ENCODE measurements at regions of chr12 and their contacts with region 1.

Region 1: GRCh38 chr12:8026291-8026900 is 6.1 kb upstream of the FOXJ2 start:
- DNase-seq: peak; percentile 99
- H3K4me3 ChIP-seq: peak overlapping the region; percentile 57 to 97 (median 77)
- H3K27ac ChIP-seq: peak overlapping the region; percentile 100
- H3K4me1 ChIP-seq: peaks cover 3% of the 10 kb centered on the region
- H3K27me3 ChIP-seq: no peaks in the 10 kb centered on the region
- CTCF ChIP-seq: no peak
- POLR2A ChIP-seq: peak; percentile 41

Region 2: DNA sequence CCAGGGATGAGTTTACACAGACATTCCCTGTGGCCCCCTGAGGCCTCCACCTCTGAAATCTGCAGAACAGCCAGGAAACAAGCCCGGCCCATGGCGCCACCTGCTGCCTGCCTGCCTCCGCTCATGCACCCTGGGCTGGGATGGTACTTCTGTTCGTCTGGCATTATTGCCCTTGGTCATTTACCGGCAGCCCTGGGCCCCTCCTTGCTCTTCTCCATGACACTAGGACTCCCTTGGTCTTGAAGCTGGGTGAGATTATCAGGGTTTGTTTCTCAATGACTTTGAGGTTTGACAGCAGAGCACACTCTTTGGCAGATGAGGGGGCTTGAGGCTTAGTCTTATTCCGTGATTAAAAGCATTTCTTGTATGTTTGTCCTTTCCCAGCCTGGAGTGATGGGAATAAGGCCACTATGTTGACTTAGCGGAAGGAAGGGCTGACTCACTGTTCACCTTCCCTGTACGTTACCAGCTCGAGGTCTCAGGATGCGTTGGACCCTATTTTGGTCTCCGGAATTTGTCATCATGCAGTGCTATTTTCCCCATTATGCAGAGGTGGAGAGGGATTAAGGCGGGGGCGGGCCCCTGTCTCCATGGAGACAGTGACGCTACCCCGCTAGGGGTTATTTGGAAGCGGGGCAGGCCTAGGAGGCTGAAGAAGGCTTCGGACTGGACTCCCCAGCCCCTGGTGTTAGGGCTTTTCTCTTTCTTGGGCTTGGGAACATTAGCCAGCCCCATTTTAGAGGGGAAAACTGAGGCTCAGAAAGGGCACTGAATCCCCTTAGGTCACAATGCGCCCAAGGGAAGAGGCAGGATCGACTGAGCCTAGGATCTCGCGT is 837.6 kb before region 1 on chr12:
- CTCF ChIA-PET with region 1: no interaction called
- POLR2A ChIA-PET with region 1: no interaction called
- dilution Hi-C with region 1: no loop called
- intact Hi-C with region 1: loop called (anchors 2 kb)
- DNase-seq: peak; percentile 95
- H3K4me3 ChIP-seq: peak overlapping the region in 2 of 3 experiments; percentile 64 to 69
- H3K27ac ChIP-seq: peak overlapping the region; percentile 98
- H3K4me1 ChIP-seq: peaks cover 22% of the 10 kb centered on the region
- H3K27me3 ChIP-seq: no peaks in the 10 kb centered on the region
- CTCF ChIP-seq: peak; percentile 87 to 88
- POLR2A ChIP-seq: no peak

Region 3: DNA sequence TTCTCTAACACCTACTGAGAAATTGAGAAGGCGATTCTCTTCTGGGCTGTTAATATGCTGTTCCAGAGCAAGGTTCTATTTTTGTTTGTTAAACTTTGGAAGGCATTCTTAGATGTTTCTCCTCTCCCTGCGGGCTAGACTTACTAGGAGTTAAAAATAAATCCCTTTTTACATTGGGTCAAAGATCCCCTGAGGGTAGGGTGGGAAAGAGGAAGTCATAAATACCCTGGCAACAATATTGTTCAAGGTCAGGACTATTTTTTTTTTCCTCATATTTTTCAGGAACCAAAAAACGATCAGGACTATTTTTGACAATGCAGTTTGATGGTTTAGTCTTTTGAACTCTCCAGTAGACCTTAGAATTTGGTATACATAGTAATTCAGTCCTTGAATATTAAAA is 141.7 kb before region 1 on chr12:
- CTCF ChIA-PET with region 1: no interaction called
- POLR2A ChIA-PET with region 1: no interaction called
- dilution Hi-C with region 1: no loop called
- intact Hi-C with region 1: no loop called
- DNase-seq: no peak
- H3K4me3 ChIP-seq: no peak overlapping the region
- H3K27ac ChIP-seq: no peak overlapping the region
- H3K4me1 ChIP-seq: no peaks in the 10 kb centered on the region
- H3K27me3 ChIP-seq: peaks cover 0 to 8% of the 10 kb centered on the region in 2 experiments
- CTCF ChIP-seq: no peak
- POLR2A ChIP-seq: no peak

Region 4: DNA sequence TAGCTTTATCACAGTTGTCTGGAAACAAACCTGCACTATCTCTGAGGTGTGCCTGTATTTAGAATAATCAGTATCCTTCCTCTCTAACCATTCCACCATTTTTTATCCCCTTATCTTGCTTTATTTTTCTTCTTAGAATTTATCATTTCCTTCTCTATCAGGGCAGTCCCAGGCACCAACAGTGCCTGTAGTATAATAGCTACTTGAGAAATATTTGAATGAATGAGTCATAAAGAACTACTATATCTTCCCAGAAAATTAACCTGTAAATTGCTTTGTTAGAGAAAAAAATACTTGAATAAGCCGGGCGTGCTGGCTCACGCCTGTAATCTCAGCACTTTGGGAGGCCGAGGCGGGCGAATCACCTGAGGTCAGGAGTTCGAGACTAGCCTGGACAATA is 15.1 kb before region 1 on chr12:
- CTCF ChIA-PET with region 1: no interaction called
- POLR2A ChIA-PET with region 1: no interaction called
- dilution Hi-C with region 1: no loop called
- intact Hi-C with region 1: loop called (anchors 2 kb)
- DNase-seq: peak; percentile 76
- H3K4me3 ChIP-seq: no peak overlapping the region
- H3K27ac ChIP-seq: no peak overlapping the region
- H3K4me1 ChIP-seq: no peaks in the 10 kb centered on the region
- H3K27me3 ChIP-seq: peaks cover 6 to 11% of the 10 kb centered on the region in 2 experiments
- CTCF ChIP-seq: no peak
- POLR2A ChIP-seq: no peak